ENCODE measurements at regions of chr4 and their contacts with region 1.

Region 1: DNA sequence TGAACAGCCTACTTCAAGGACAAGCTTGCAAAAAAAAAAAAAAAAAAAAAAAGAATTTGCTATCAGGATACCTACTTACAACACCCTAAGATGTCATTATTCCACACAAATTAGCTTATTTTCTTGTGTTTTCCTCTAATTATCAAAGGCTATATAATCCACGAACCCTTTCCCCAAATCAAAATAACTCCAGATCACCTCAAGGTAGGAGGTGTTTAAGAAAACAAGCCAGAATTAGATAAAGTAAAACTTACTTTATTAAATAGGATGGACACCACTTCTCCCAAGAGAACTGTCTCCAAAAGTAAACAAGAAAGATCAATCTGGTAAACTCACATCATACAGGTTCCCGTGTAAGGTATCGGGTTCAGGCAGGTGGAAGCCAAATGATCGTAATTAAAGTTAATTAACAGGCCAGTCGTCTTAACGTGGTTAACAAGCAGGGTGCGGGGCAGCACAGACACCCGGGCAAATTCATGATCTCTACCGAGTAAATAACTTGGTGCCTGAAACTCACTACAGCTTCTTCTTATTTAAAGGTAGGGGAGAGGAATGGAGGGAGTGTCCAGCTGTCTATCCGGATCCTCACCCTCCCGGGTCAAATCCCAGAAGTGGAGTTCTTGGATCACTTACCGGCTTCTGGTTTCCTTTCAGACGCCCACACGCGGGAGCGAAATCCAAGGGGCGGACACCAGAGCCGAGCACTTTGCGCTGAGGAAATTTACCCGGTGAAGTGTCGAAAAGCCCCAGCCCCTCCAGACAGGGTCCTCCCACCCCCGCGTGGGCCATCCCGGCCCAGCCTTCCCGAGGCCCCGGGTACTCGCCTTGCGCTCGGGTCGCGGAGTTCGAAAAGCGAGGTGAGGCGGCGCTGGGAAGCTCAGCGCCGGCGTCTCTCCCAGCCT is 708 bp downstream of the ARAP2 start:
- H3K4me3 ChIP-seq: peak overlapping the region; percentile 79
- H3K27ac ChIP-seq: peak overlapping the region; percentile 78
- H3K4me1 ChIP-seq: peaks cover 7% of the 10 kb centered on the region; the same call in 1 of the 2 replicates
- CTCF ChIP-seq: no peak

Region 2: DNA sequence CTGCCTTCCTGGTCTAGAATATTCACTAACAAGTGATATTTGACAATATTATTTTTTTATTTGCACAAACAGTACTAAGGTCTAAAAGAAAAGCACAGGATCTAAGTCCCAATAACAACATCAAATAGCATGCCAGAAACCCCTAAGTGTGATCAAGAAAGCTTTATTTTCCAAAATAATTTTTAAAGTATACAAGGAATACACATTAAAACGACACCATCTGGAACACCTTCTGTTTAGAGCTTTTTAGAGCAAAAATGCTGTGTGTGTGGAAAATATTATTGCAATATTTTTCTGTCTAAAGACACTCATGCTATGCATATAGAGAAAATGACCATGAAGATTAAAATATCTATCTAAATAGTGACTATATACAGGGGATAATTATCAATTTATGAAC is 102.4 kb before region 1 on chr4:
- CTCF ChIA-PET with region 1: no interaction called
- POLR2A ChIA-PET with region 1: interaction called, 11 read pairs
- H3K4me3 ChIP-seq: no peak overlapping the region
- H3K27ac ChIP-seq: no peak overlapping the region
- H3K4me1 ChIP-seq: no peaks in the 10 kb centered on the region
- CTCF ChIP-seq: no peak